Pancreas (tissue), 10 donors: ENCODE measurements at regions of chr2 and their contacts with region 1.

Region 1: GRCh38 chr2:207467716-207468347 is 61.9 kb upstream of the CREB1 start:
- DNase-seq: no peak
- ATAC-seq: no peak
- H3K4me3 ChIP-seq: no peak overlapping the region
- H3K27ac ChIP-seq: no peak overlapping the region
- H3K4me1 ChIP-seq: no peaks in the 10 kb centered on the region
- H3K27me3 ChIP-seq: no peaks in the 10 kb centered on the region
- CTCF ChIP-seq: no peak

Region 2: DNA sequence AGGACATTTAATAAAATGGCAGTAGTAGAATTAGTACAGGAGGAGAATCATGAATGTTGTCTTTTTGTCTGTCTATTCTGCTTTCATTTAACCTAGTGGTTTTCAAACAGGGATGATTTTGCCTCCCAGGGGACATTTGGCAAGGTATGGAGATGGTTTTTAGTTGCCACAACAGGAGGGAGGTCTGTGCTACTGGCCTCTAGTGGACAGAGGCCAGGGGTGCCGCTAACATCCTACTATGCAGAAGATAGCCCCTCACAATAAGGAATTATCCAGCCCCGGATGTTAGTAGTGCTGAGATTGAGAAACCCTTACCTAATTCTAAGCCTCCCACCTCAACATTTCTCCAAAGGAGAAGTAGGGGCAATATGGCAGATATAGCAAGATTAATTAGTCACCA is 684.1 kb before region 1 on chr2:
- intact Hi-C with region 1: loop called in 1 of 3 experiments (anchors 10 kb)
- DNase-seq: no peak
- ATAC-seq: no peak
- H3K4me3 ChIP-seq: no peak overlapping the region
- H3K27ac ChIP-seq: no peak overlapping the region
- H3K4me1 ChIP-seq: no peaks in the 10 kb centered on the region
- H3K27me3 ChIP-seq: no peaks in the 10 kb centered on the region
- CTCF ChIP-seq: no peak